GM12878 (cell line): ENCODE measurements at regions of chr1 and their contacts with region 1.

Region 1: DNA sequence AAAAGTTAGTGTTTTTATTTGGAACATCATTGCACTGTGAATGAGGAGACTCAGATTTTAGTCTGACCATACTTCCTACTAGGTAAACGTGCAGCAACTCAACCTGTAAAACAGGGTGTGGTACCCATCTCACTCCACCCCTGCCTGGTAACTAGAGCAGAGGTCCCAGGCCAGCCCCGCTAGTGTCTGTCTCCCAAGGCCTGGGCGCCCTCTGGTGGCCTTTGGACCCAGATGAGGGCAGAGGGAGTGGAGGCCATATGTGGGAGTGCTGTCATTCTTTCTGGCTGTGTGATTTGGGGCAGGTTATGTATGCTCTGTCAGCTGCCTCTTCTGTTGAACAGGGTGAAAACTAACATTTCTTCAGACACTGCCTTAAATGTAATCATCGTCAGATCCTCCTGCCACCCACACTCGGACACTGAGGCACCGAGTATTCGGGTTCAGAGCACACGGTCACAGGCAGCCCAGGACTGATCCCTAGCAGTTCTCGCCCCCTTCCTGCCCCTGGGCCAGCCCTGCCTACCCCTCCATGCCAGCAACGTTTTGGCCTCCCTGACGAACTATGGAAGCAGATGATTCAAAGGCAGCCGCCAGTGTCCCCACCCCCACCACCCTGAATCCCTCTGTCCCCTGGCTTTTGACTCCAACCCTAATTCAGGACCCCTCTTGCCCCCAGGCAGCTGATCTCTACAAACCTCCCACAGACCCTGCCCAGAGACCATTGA is 76.0 kb downstream of the CD247 start:
- DNase-seq: no peak
- ATAC-seq: peak; percentile 98
- H3K4me3 ChIP-seq: no peak overlapping the region
- H3K27ac ChIP-seq: no peak overlapping the region
- H3K4me1 ChIP-seq: peaks cover 8% of the 10 kb centered on the region
- H3K27me3 ChIP-seq: peaks cover 0 to 3% of the 10 kb centered on the region in 2 experiments; a peak in 1 of 4 replicates
- CTCF ChIP-seq: peak; percentile 92
- EP300 ChIP-seq: no peak
- POLR2A ChIP-seq: no peak
- RAD21 ChIP-seq: peak; percentile 98

Region 2: DNA sequence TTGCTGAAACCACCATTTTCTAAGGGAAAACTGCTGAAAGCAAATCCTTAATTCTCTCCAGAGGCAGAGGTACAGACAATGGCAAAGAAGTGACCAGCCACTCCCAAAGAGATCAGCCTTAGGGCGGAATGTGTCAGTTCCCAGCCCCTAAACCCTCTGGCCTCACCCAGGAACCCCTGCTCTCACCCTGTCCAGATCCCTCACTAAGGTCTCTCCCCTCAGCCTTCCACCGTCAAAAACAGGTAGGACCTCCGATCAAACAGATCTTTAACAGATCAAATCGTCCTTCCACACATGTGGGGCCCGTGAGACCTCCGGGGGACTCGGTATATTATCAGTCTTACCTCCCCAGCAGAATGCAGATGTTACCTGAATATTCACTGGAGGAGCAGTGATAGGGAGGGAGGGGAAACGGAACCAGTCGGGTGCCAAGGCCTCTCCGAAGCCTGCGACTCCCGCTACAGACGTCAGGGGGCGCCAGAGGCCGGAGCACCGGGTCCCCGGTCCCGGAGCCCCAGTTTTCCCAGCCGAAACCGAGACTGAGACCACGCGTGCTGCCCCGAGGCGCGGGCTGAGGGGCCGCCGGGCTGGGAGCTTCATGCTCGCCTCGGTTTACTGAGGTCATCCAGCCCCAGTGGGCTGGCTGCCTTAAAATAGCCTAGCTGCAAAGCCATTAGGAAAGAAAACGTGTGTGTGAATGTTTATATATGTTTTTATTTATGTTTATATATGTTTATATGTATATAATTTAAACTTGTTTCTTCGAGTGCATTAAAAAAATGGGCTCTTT is 375.8 kb before region 1 on chr1:
- CTCF ChIA-PET with region 1: interaction called, 21 read pairs
- POLR2A ChIA-PET with region 1: no interaction called
- RAD21 ChIA-PET with region 1: interaction called, 8 read pairs
- SMC1A ChIA-PET with region 1: interaction called, 4 read pairs
- in situ Hi-C with region 1: loop called (anchors 5 kb)
- intact Hi-C with region 1: loop called (anchors 1 kb)
- DNase-seq: no peak
- ATAC-seq: peak; percentile 97
- H3K4me3 ChIP-seq: peak overlapping the region; percentile 70; the same call in 1 of the 2 replicates
- H3K27ac ChIP-seq: no peak overlapping the region
- H3K4me1 ChIP-seq: no peaks in the 10 kb centered on the region
- H3K27me3 ChIP-seq: no peaks in the 10 kb centered on the region; a peak in 1 of 4 replicates
- CTCF ChIP-seq: peak; percentile 92 to 98 (median 97); a peak in 5 of 6 replicates
- EP300 ChIP-seq: no peak
- POLR2A ChIP-seq: no peak
- RAD21 ChIP-seq: peak; percentile 87

Region 3: DNA sequence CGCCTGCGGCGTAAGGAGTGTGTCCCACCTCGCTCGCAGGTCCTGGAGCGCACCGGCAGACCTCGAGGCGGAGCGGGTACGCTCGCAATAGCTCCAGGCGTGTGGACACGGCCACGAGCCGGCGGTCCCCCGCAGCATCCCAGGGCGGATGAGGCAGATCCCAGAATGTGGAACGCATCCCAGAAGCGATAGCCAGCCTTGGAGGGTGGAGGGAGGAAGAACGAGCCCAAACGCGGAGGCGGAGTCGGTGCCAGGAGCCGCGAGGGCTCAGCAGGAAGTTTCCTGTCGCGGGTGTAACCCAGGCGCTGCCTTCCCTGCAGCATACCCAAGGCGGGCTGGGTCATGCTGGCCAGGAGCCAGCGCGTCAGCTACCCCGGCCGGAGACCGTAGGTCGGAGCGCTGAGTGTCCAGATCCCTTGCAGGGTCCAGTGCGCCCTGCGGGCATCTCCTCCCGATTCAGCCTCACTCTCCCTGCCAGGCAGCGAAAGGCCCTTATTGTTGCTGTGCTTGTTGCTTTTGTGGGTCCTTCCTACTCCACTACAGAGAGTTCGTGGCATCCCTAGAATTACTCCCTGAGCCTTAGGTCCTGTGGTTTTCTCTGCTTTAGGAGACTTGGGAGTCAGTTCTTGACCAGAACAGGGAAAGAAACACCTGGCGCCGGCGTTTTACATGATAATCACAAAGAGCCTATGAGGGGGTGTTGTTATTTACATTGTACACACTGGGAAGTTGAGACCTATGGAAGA is 320.7 kb before region 1 on chr1:
- CTCF ChIA-PET with region 1: no interaction called
- POLR2A ChIA-PET with region 1: no interaction called
- RAD21 ChIA-PET with region 1: no interaction called
- SMC1A ChIA-PET with region 1: no interaction called
- in situ Hi-C with region 1: no loop called
- intact Hi-C with region 1: loop called (anchors 10 kb)
- DNase-seq: no peak
- ATAC-seq: peak; percentile 44
- H3K4me3 ChIP-seq: no peak overlapping the region
- H3K27ac ChIP-seq: no peak overlapping the region
- H3K4me1 ChIP-seq: no peaks in the 10 kb centered on the region
- H3K27me3 ChIP-seq: peaks cover 0 to 2% of the 10 kb centered on the region in 2 experiments; a peak in 1 of 4 replicates
- CTCF ChIP-seq: no peak
- EP300 ChIP-seq: no peak
- POLR2A ChIP-seq: no peak
- RAD21 ChIP-seq: no peak

Region 4: DNA sequence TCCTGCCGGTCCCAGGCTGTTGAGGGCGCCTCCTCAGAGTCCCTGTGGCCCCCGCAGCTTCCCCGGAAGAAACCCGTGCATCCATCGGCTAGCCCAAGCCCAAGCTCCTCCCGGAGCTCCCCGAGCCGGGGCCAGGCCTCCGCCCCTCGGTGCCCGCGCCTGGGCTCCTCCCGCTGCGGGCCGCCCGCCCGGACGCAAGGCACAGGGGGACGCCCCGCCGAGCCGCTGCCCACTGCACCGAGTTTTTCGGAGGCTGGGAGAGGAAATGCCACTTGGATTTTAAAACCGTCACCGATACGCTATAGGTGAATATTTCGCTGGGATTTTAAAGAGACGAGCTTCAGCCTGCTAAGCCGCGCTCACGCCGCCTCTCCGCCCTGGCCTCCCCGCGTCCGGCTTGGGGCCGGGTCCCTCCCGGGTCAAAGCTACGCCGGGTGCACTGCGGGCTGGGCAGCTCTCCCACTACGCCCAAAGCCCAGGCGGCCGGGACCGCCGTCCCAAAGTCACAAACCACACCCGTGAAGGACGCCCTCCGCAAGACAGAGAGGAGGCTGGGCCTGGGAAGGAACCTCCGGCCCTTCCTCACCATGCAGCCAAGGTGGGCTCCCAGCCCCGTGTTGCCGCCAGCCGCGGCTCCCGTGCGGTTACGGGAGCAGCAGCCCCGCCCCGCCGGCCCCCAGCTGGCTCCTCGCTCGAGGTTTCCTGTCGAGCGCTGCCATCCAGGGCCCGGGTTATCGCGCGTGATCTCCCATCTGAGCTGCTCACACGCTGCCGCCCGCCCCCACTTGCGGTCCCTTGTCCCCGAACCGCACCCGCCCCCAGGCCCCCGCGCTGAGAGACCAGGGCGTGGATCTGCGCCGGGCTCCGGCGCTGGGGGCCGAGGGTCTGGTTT is 12.9 kb after region 1 on chr1:
- CTCF ChIA-PET with region 1: interaction called, 25 read pairs
- POLR2A ChIA-PET with region 1: interaction called, 3 read pairs
- RAD21 ChIA-PET with region 1: interaction called, 8 read pairs
- SMC1A ChIA-PET with region 1: interaction called, 5 read pairs
- in situ Hi-C with region 1: no loop called
- intact Hi-C with region 1: no loop called
- DNase-seq: no peak
- ATAC-seq: peak; percentile 79
- H3K4me3 ChIP-seq: peak overlapping the region; percentile 80
- H3K27ac ChIP-seq: peak overlapping the region; percentile 20; the same call in 1 of the 2 replicates
- H3K4me1 ChIP-seq: peaks cover 5% of the 10 kb centered on the region
- H3K27me3 ChIP-seq: no peaks in the 10 kb centered on the region
- CTCF ChIP-seq: no peak
- EP300 ChIP-seq: no peak; a peak in 1 of 4 replicates
- POLR2A ChIP-seq: peak; percentile 37
- RAD21 ChIP-seq: no peak